ENCODE measurements at regions of chr5 and their contacts with region 1.

Region 1: GRCh38 chr5:142012792-142013388 is at the start of gene GNPDA1:
- DNase-seq: peak; percentile 72
- ATAC-seq: peak; percentile 88
- H3K4me3 ChIP-seq: peak within 1 kb of the TSS; percentile 69
- H3K27ac ChIP-seq: peak within 1 kb of the TSS; percentile 73
- H3K4me1 ChIP-seq: peaks cover 10% of the 10 kb centered on the region
- H3K27me3 ChIP-seq: no peaks in the 10 kb centered on the region
- CTCF ChIP-seq: 0 out of 2 replicates have a peak, but pooled peaks have one; percentile 15
- POLR2A ChIP-seq: peak; percentile 56
- RAD21 ChIP-seq: no peak
- total RNA-seq, gene GNPDA1: 50.5 and 60.6 TPM in 2 replicates

Region 2: GRCh38 chr5:141992349-141992963 is 20.4 kb before region 1 on chr5:
- CTCF ChIA-PET with region 1: interaction called, 4 read pairs
- POLR2A ChIA-PET with region 1: interaction called, 23 read pairs
- dilution Hi-C with region 1: no loop called
- in situ Hi-C with region 1: no loop called
- intact Hi-C with region 1: no loop called
- DNase-seq: peak; percentile 62
- ATAC-seq: peak; percentile 69
- H3K4me3 ChIP-seq: no peak overlapping the region
- H3K27ac ChIP-seq: no peak overlapping the region
- H3K4me1 ChIP-seq: no peaks in the 10 kb centered on the region
- H3K27me3 ChIP-seq: no peaks in the 10 kb centered on the region
- CTCF ChIP-seq: peak; percentile 70
- POLR2A ChIP-seq: no peak
- RAD21 ChIP-seq: peak; percentile 61

Region 3: DNA sequence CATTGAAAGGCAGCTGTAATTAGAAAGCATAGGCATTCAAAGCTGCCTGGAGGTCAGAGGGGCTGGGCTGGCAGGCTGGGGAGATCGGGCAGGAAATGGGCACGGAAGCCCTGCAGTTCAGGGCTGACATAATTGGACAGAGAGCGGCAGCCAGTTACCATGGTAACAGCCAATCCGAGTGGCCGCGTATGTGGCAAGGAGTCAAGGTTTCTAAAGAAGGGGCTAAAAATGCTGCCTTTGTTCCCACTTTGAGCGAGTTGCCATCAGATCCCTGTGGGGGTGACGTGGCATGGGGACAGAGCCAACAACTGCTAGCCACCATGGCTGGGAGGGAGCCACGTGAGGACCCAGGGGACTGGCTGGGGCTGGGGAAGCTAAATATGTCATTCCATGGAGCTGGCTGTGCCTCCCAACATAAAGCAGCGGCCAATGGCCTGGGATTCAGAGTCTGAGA is 51.0 kb after region 1 on chr5:
- CTCF ChIA-PET with region 1: no interaction called
- POLR2A ChIA-PET with region 1: no interaction called
- dilution Hi-C with region 1: no loop called
- in situ Hi-C with region 1: no loop called
- intact Hi-C with region 1: loop called (anchors 5 kb)
- DNase-seq: peak; percentile 61
- ATAC-seq: peak; percentile 89
- H3K4me3 ChIP-seq: peak overlapping the region; percentile 8
- H3K27ac ChIP-seq: peak overlapping the region; percentile 26; the same call in 1 of the 2 replicates
- H3K4me1 ChIP-seq: peaks cover 8% of the 10 kb centered on the region
- H3K27me3 ChIP-seq: peaks cover 4% of the 10 kb centered on the region
- CTCF ChIP-seq: no peak
- POLR2A ChIP-seq: no peak
- RAD21 ChIP-seq: no peak

Region 4: DNA sequence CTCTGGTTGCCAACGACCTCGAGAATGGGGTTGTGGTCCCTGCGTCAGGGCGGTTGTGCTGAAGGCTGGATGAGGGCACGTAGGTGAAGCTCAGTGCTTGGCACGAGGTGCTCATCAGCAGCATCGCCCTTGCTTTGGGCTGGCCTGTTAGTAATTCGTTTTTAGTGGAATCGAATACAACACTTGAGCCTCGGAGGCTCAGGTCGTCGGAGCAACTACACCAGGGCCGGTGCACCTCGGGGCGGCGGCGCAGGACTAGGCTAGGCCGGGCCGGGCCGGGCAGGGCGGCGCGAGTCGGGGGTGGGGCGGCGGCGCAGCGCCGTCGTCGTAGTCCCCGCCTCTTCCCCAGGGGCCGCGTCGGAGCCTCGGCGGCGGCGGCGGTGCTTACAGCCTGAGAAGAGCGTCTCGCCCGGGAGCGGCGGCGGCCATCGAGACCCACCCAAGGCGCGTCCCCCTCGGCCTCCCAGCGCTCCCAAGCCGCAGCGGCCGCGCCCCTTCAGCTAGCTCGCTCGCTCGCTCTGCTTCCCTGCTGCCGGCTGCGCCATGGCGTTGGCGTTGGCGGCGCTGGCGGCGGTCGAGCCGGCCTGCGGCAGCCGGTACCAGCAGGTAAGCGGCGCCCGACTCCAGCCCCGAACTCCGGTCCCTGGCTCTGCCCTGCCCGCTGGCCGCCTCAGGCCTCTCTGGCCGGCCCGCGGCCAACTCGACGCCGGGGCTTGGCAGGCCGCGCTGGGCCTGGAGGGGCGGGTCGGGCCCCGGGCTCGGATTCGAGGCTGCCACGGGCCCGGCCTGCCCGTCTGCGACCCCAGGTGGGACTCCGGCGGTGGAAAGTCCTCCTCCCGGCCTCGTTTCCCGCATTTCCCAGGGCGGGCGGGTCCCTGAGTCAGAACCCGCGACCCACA is 95.8 kb after region 1 on chr5 and contains the start of gene NDFIP1:
- CTCF ChIA-PET with region 1: no interaction called
- POLR2A ChIA-PET with region 1: no interaction called
- dilution Hi-C with region 1: no loop called
- in situ Hi-C with region 1: no loop called
- intact Hi-C with region 1: loop called (anchors 2 kb)
- DNase-seq: peak; percentile 60
- ATAC-seq: peak; percentile 99
- H3K4me3 ChIP-seq: peak within 1 kb of the TSS; percentile 82
- H3K27ac ChIP-seq: peak within 1 kb of the TSS; percentile 87
- H3K4me1 ChIP-seq: peaks cover 4% of the 10 kb centered on the region
- H3K27me3 ChIP-seq: no peaks in the 10 kb centered on the region
- CTCF ChIP-seq: no peak
- POLR2A ChIP-seq: peak; percentile 74
- RAD21 ChIP-seq: no peak
- total RNA-seq, gene NDFIP1: 7.7 and 21.9 TPM in 2 replicates

Region 5: GRCh38 chr5:142145106-142145900 is 132.4 kb after region 1 on chr5:
- CTCF ChIA-PET with region 1: interaction called, 5 read pairs
- POLR2A ChIA-PET with region 1: no interaction called
- dilution Hi-C with region 1: no loop called
- in situ Hi-C with region 1: no loop called
- intact Hi-C with region 1: loop called (anchors 2 kb)
- DNase-seq: peak; percentile 68
- ATAC-seq: peak; percentile 97
- H3K4me3 ChIP-seq: no peak overlapping the region
- H3K27ac ChIP-seq: no peak overlapping the region
- H3K4me1 ChIP-seq: no peaks in the 10 kb centered on the region
- H3K27me3 ChIP-seq: no peaks in the 10 kb centered on the region
- CTCF ChIP-seq: peak; percentile 68
- POLR2A ChIP-seq: no peak
- RAD21 ChIP-seq: peak; percentile 52

Region 6: GRCh38 chr5:142356716-142357473 is 344.0 kb after region 1 on chr5:
- CTCF ChIA-PET with region 1: no interaction called
- POLR2A ChIA-PET with region 1: no interaction called
- dilution Hi-C with region 1: no loop called
- in situ Hi-C with region 1: no loop called
- intact Hi-C with region 1: no loop called
- DNase-seq: peak; percentile 92
- ATAC-seq: peak; percentile 87
- H3K4me3 ChIP-seq: peak overlapping the region; percentile 46
- H3K27ac ChIP-seq: peak overlapping the region; percentile 95
- H3K4me1 ChIP-seq: peaks cover 12% of the 10 kb centered on the region
- H3K27me3 ChIP-seq: no peaks in the 10 kb centered on the region
- CTCF ChIP-seq: 0 out of 2 replicates have a peak, but pooled peaks have one; percentile 9
- POLR2A ChIP-seq: peak; percentile 83
- RAD21 ChIP-seq: no peak; the same call in 1 of the 2 replicates

Region 7: GRCh38 chr5:142699184-142699720 is 686.4 kb after region 1 on chr5:
- CTCF ChIA-PET with region 1: no interaction called
- POLR2A ChIA-PET with region 1: no interaction called
- dilution Hi-C with region 1: no loop called
- in situ Hi-C with region 1: no loop called
- intact Hi-C with region 1: loop called (anchors 10 kb)
- DNase-seq: peak; percentile 84
- ATAC-seq: peak; percentile 98
- H3K4me3 ChIP-seq: no peak overlapping the region
- H3K27ac ChIP-seq: no peak overlapping the region
- H3K4me1 ChIP-seq: peaks cover 10% of the 10 kb centered on the region
- H3K27me3 ChIP-seq: no peaks in the 10 kb centered on the region
- CTCF ChIP-seq: peak; percentile 99
- POLR2A ChIP-seq: peak; percentile 69
- RAD21 ChIP-seq: peak; percentile 100

Region 8: DNA sequence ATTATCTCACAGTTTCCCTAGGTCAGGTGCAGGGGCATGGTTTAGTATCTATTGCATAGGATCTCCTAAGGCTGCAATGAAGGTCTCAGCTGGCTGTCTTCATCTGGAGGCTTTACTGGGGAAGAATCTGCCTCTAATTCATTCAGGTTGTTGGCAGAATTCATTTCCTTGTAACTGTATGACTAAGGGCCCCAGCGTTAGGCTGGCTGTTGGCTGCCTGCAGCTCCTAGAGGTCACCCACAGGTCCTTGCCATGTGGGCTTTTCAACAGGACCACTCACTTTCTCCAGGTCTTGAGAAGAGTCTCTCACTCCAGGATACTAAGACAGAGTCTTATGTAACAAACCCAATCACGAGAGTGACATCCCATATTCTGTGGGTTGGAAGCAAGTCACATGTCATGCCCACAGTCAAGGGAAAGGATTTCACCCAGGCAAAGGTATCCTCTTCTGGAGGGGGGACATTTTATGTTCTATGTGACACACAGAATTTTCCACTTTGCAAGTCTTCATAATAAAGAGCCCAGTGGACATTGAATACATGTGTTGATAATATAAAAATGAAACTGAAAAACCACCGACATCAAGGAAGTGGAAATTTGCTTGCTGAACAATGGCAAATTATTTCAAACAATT is 1837.3 kb after region 1 on chr5:
- CTCF ChIA-PET with region 1: no interaction called
- POLR2A ChIA-PET with region 1: no interaction called
- dilution Hi-C with region 1: no loop called
- in situ Hi-C with region 1: no loop called
- intact Hi-C with region 1: no loop called
- DNase-seq: no peak
- ATAC-seq: no peak
- H3K4me3 ChIP-seq: no peak overlapping the region
- H3K27ac ChIP-seq: no peak overlapping the region
- H3K4me1 ChIP-seq: no peaks in the 10 kb centered on the region
- H3K27me3 ChIP-seq: no peaks in the 10 kb centered on the region
- CTCF ChIP-seq: no peak
- POLR2A ChIP-seq: no peak
- RAD21 ChIP-seq: no peak